K562 (cell line): ENCODE measurements at regions of chr15 and their contacts with region 1.

Region 1: DNA sequence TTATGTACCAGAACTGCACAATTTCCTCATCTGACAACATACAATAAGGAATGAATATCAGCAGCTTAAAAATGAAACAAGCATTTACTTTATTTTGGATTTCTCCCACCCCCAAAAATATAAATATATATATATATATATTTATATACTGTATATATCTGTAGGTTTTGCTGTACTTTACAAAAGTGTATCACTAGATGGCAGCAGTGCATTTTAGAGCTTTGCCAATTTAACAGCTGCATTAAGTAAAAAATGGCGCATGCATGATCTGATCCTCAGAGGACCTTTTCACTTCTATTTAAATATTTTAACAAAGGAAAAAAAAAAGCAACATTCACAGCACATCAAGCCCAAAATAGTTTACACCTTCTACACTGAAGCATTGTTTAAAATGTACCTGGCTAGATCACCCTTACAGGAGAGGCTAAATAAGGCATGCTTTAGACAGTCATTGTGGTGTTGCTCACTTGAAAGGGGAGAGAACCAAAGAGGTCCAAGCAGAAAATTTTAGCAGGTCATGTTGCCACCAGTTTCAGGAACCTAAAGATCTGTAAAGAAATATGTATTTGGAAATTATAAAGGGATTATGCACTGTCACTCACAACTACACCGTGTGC is 72.6 kb downstream of the NPTN start:
- DNase-seq: peak in 2 of 4 experiments; percentile 24 to 67
- ATAC-seq: peak; percentile 82
- H3K4me3 ChIP-seq: no peak overlapping the region
- H3K27ac ChIP-seq: no peak overlapping the region
- H3K4me1 ChIP-seq: peaks cover 0 to 11% of the 10 kb centered on the region in 2 experiments; a peak in 3 of 5 replicates
- H3K27me3 ChIP-seq: no peaks in the 10 kb centered on the region
- CTCF ChIP-seq: peak; percentile 30 to 69 (median 51); a peak in 3 of 6 replicates
- EP300 ChIP-seq: no peak
- POLR2A ChIP-seq: no peak
- RAD21 ChIP-seq: peak; percentile 49 to 65

Region 2: DNA sequence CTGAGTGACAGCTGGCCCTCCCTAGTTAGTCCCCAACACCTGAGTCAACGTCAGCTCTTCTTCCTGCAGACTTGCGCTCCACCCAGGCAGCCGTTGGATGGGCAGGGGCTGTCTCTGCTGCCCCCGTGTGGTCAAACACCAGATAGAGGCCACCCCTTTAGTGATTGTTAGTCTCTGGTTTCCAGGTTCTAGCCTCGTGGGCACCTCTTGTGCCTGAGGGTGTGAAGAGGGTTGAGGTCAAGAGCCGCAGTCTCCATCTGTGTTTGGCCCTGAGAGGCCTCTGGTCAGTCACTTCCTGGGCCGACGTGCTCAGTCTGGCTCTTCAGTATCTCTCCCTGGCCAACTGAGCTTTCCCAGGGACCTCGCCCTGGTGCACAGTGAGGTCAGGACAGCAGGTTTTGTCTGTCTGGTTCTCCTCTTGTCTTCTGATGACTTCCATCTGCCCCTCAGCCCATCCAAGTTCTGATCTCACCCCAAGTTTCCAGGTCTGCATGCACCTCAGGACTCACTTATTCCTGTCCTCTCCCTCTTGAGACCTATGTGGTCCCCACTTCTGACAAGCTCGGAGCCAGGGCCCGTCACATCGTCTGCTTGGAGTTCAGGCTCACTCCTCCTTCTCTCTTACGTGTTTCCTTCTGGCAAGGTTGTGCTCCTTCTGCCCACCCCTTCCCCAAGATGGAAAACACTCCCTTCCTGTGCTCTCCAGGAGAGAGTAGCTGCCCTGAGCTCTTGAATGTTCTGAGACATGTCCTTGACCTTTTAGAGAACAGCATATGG is 144.4 kb after region 1 on chr15:
- CTCF ChIA-PET with region 1: interaction called, 18 read pairs
- POLR2A ChIA-PET with region 1: no interaction called
- in situ Hi-C with region 1: no loop called
- intact Hi-C with region 1: loop called (anchors 1 kb)
- DNase-seq: peak; percentile 76 to 82 (median 78)
- ATAC-seq: peak; percentile 93
- H3K4me3 ChIP-seq: no peak overlapping the region
- H3K27ac ChIP-seq: no peak overlapping the region
- H3K4me1 ChIP-seq: no peaks in the 10 kb centered on the region
- H3K27me3 ChIP-seq: no peaks in the 10 kb centered on the region; a peak in 1 of 5 replicates
- CTCF ChIP-seq: peak; percentile 84 to 91 (median 87)
- EP300 ChIP-seq: no peak
- POLR2A ChIP-seq: no peak
- RAD21 ChIP-seq: peak; percentile 41 to 79